Heart left ventricle (tissue), 16 donors: ENCODE measurements at regions of chr2 and their contacts with region 1.

Region 1: DNA sequence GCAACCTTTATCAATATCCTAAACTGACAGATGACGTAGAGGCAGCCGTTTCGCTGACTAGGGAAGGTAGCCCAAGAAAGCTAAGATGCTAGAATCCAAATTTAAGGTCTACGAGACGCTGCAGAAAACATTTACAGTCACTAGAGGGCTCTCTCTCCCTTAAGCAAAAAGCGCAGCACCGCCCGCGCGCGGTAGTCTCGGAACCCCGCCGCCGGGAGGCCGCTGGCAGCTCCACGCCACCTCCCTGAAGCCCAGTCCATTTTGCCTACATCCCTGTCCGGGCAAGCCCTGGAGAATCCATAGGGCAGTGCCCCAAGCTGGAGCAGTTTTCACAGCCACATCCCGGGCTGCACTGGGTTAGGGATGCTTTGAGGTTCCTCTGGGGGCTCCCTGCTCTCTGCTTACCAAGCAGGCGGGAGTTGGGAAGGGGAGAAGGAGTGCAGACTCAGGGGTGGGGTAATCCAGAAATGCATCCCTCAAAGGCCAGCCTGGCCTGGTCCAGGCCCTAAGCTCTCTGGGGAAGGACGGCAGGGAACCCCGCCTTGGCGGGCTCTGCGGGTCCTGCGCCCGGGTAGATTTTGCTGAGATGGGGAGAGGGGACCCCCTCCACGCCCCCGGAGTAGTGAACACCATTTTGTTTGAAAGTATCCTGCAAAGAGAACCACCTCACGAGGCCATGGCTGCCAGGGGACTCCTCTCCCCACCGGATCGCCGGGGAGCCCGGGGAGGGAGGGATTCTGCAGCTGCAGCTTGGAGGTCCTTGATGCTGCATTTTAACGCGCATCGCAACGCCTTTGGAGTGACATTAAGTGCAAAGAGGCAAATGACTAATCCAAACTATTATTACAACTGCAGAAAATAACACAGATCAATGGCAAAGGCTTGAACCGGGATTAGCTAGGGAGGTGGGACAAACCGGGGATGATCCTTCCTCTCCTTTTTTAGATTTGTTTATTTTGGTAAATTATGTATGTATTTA is 1.3 kb upstream of the DPYSL5 start:
- DNase-seq: peak; percentile 57 to 82 (median 64)
- ATAC-seq: peak in 3 of 4 donors; percentile 78 to 89 (median 88)
- H3K4me3 ChIP-seq: peak overlapping the region in 1 of 12 donors; percentile 16
- H3K27ac ChIP-seq: no peak overlapping the region
- H3K4me1 ChIP-seq: peaks cover 9 to 39% (median 30%) of the 10 kb centered on the region in 12 donors
- H3K27me3 ChIP-seq: peaks cover 41 to 93% (median 63%) of the 10 kb centered on the region in 9 donors
- CTCF ChIP-seq: peak; percentile 68 to 84 (median 77)
- POLR2A ChIP-seq: no peak

Region 2: GRCh38 chr2:26892922-26893524 is 46.4 kb after region 1 on chr2:
- intact Hi-C with region 1: no loop called
- DNase-seq: no peak
- ATAC-seq: peak; percentile 20 to 48 (median 26)
- H3K4me3 ChIP-seq: no peak overlapping the region
- H3K27ac ChIP-seq: no peak overlapping the region
- H3K4me1 ChIP-seq: no peaks in the 10 kb centered on the region
- H3K27me3 ChIP-seq: no peaks in the 10 kb centered on the region
- CTCF ChIP-seq: no peak
- POLR2A ChIP-seq: no peak

Region 3: DNA sequence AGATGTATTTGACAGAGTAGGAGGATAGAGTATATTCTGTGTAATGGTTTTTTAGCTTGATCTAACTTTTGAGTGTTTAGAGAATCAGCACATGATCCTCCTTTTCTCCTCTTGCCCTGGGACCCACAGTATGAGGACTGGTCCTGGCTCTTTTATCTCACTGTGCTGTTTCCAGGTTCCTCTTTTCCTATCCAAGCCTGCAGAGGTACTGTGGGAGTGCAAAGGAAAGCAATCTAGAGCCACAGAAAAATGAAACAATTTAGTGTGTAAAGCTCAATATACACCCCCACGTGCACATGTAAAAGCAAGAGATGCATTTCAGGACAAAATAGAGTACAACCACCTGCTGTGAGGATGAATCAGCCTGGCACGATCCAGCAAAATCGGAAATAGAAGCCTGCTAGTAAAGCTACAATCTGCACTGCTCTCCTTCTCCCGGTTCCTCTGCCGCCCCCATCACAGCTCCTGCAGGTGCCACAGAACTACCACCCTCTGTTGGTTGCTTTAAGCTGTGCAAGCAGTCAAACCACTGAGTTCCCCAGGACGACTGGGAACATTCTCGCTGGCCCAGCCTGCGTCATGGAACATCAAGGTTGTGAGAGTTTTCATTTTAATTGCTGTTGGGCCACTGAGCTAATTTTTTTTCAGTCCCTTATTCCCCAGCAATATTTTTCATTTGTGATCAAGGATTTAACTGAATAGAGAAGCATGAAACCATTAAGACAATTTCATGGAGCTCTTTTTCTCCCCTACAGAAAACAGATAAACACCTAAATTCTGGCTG is 76.0 kb after region 1 on chr2:
- intact Hi-C with region 1: loop called in 8 of 10 experiments (anchors 2 to 5 kb)
- DNase-seq: peak in 4 of 5 donors; percentile 38 to 62 (median 46)
- ATAC-seq: peak; percentile 73 to 91 (median 88)
- H3K4me3 ChIP-seq: no peak overlapping the region
- H3K27ac ChIP-seq: no peak overlapping the region
- H3K4me1 ChIP-seq: peaks cover 0 to 6% (median 0%) of the 10 kb centered on the region in 12 donors
- H3K27me3 ChIP-seq: peaks cover 0 to 7% (median 0%) of the 10 kb centered on the region in 9 donors
- CTCF ChIP-seq: peak; percentile 30 to 69 (median 50)
- POLR2A ChIP-seq: no peak

Region 4: GRCh38 chr2:26942543-26943295 is 96.1 kb after region 1 on chr2:
- intact Hi-C with region 1: loop called (anchors 1 to 5 kb)
- DNase-seq: peak; percentile 44 to 73 (median 50)
- ATAC-seq: peak in 3 of 4 donors; percentile 33 to 60 (median 36)
- H3K4me3 ChIP-seq: no peak overlapping the region
- H3K27ac ChIP-seq: no peak overlapping the region
- H3K4me1 ChIP-seq: peaks cover 0 to 12% (median 8%) of the 10 kb centered on the region in 12 donors
- H3K27me3 ChIP-seq: peaks cover 0 to 27% (median 3%) of the 10 kb centered on the region in 9 donors
- CTCF ChIP-seq: peak; percentile 71 to 89 (median 84)
- POLR2A ChIP-seq: no peak